ENCODE measurements at regions of chr1 and their contacts with region 1.

Region 1: GRCh38 chr1:218665221-218665620 is 320.1 kb downstream of the TGFB2 start:
- DNase-seq: peak; percentile 12
- H3K4me3 ChIP-seq: no peak overlapping the region
- H3K27ac ChIP-seq: peak overlapping the region in 1 of 2 donors; percentile 2
- H3K4me1 ChIP-seq: no peaks in the 10 kb centered on the region
- H3K27me3 ChIP-seq: no peaks in the 10 kb centered on the region
- CTCF ChIP-seq: no peak
- POLR2A ChIP-seq: no peak

Region 2: DNA sequence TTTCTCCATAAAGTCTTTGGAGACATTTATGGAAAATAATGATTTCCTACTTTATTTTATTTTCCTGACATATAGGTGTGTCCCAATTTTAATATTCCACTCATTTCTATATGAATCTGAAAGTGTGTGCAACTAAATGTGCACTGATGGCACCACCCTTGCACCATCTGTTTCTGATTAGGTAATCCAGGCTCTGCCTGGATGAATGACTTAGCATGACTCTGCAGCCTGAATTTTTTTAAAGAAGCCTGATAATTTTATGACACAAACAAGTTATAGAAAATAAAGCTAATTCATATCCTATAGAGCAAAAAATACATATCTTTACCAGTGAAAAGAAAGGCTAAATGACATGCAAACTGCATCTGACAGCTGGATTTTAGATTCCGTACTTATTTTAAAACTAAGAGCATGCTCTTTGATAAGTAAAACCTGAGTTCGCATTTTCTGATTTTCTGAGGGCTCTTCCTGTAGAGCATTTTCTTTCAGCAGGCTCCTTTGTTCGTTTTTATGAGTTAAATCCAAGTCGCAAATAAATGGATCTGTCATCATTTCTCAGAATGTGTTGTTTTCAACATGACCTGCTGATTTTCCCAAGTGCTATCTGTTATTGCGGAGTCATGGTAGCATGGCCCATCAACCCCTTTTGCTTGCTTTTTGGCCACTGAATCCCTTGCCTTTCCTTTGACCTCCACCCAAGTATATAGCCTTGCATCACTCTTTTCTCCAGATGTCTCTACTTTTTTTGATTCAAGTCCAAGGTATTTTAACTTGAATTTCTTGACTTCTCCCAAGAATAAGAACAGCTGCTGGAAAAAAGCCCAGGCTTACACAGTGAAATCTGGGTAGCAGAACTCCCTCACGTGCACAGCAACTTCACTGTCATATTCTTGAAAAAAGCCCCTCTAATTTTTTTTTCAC is 455.7 kb after region 1 on chr1:
- intact Hi-C with region 1: no loop called
- DNase-seq: no peak
- H3K4me3 ChIP-seq: no peak overlapping the region
- H3K27ac ChIP-seq: no peak overlapping the region
- H3K4me1 ChIP-seq: no peaks in the 10 kb centered on the region
- H3K27me3 ChIP-seq: no peaks in the 10 kb centered on the region
- CTCF ChIP-seq: no peak
- POLR2A ChIP-seq: no peak

Region 3: DNA sequence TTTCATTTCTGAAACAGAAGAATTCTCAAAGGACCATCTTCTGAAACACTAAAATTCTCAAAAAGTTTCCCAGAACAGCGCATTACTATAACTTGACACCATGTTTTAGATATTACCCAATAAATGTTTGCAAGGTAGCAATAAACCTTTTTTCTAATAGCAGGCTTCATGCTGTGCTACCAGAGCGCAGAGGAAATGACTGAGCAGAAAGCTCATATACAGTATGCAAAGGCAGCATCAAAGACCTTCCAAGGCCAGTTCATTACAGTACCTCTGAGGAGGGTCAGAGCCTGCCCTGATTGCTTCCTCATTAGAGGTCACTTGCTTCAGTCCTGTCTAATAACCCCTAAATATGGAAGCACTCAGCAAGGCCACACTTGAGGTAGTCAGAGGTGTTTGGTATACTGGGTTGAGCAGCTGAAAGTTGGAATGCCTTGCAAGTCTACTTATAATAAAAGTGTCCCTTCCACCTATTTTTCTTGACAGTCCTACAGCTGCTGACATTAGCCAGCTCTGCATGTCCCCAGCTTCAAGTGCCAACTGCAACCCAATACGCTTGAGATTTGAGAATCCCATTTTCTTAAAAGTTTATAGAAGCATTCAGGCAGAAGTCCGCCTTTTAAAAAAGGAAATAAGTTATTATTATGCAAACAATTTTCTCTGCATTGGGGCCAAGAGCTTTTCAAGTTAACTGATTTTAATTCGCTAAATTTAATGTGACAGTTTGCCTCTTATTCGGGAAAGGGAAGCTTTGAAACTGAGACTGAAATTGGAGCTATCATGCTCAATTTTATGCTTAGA is 740.5 kb after region 1 on chr1:
- intact Hi-C with region 1: loop called (anchors 10 kb)
- DNase-seq: no peak
- H3K4me3 ChIP-seq: no peak overlapping the region
- H3K27ac ChIP-seq: no peak overlapping the region
- H3K4me1 ChIP-seq: no peaks in the 10 kb centered on the region
- H3K27me3 ChIP-seq: no peaks in the 10 kb centered on the region
- CTCF ChIP-seq: no peak
- POLR2A ChIP-seq: no peak

Measured in prostate gland (tissue), 2 donors.